ENCODE measurements at regions of chr2 and their contacts with region 1.

Region 1: DNA sequence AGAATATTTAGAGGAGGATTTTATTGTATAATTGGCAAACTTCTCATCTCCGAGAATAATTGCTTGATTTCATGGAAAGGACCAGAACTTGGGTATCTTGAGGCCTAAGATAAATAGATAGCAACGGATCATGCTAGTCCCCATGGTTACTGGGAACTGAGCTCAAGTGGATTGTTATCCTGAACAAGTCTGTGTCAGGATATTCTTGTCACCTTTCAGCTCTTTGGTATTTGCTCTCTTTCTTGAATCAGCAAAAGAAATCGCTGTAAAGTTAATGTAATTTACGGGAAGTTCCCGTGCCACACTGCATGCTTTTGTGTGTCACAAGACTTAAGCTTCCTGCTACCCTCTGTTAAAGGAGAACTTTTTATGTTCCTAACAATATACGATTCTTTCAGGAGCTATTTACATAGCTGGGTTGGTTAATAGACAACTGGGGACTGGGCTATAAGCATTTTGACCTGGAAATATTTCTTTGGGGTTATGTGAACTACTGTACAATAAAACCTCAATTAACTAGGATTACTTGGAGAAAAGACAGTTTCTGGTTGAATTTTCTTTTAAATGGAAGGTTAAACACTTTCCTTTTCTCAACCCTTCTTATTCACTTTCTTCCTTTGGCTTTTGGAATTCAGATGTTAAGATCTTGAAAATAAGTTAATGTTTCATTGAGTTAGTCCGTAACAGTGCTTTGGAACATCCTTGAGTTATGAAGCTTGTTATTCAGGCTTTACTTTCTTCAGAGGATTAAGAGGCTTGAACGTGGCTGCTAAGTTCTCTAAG is 151.2 kb downstream of the FMNL2 start:
- DNase-seq: peak in 1 of 2 experiments; percentile 68
- ATAC-seq: peak; percentile 32 to 69; a peak in 3 of 6 replicates
- H3K4me3 ChIP-seq: peak overlapping the region; percentile 10; the same call in 1 of the 3 replicates
- H3K27ac ChIP-seq: peak overlapping the region; percentile 76 to 79
- H3K4me1 ChIP-seq: peaks cover 62% of the 10 kb centered on the region
- CTCF ChIP-seq: no peak
- EP300 ChIP-seq: no peak
- POLR2A ChIP-seq: no peak
- RAD21 ChIP-seq: no peak

Region 2: DNA sequence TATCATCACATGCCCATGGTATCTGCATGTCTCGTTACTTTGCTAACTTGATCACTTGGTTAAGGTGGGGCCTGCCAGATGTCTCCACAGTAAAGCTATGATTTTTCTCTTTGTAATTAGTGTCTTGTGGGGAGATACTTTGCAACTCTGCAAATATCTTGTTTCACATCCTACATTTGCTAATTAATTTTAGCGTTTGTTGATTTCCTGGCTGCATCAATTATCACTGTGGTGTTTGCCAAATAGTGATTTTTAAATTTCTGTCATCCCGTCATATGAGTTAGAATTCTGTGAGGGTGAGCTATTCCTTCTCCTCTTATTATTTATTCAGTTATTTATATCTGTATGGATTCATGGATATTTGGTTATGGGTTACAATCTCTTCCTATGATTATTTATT is 10.2 kb after region 1 on chr2:
- CTCF ChIA-PET with region 1: interaction called, 11 read pairs
- POLR2A ChIA-PET with region 1: no interaction called
- DNase-seq: no peak
- ATAC-seq: no peak
- H3K4me3 ChIP-seq: no peak overlapping the region
- H3K27ac ChIP-seq: 0 out of 6 replicates have a peak overlapping the region, but pooled peaks of 1 of the 2 experiments have one; percentile 10
- H3K4me1 ChIP-seq: peaks cover 56% of the 10 kb centered on the region
- CTCF ChIP-seq: no peak
- EP300 ChIP-seq: no peak
- POLR2A ChIP-seq: no peak
- RAD21 ChIP-seq: no peak